GM13976 (cell line): ENCODE measurements at regions of chr4 and their contacts with region 1.

Region 1: DNA sequence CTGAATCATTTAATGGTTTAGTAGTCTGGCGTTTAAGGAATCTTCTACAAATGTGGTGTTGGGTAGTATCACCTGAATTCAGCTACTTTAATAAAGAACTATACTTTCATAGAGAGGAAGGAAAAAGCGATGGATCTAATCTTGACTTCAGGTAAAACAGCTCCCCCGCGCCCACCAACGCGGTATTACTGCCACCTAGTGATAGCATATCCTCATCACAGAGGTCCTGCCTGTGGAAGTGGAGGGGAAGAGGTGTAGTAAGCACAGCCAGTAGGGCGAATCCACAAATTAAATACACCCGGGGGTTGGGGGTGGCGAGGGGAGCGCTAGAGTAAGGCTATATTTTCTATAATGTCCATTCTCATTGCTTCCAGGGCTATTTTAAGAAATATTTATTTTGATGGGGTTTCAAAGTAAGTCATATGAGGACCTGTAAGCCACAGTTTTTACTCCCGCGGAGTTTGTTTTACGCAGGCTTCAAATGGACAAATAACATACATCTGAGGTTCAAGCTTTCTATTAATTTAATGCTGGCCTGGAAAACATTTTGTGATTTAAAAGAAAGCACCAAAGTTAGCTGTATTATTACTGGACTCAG is 8.3 kb upstream of the DAPP1 start:
- DNase-seq: peak; percentile 59
- CTCF ChIP-seq: peak; percentile 68

Region 2: GRCh38 chr4:99117876-99118693 is 690.3 kb before region 1 on chr4:
- in situ Hi-C with region 1: loop called (anchors 25 kb)
- DNase-seq: peak; percentile 32
- CTCF ChIP-seq: peak; percentile 25

Region 3: DNA sequence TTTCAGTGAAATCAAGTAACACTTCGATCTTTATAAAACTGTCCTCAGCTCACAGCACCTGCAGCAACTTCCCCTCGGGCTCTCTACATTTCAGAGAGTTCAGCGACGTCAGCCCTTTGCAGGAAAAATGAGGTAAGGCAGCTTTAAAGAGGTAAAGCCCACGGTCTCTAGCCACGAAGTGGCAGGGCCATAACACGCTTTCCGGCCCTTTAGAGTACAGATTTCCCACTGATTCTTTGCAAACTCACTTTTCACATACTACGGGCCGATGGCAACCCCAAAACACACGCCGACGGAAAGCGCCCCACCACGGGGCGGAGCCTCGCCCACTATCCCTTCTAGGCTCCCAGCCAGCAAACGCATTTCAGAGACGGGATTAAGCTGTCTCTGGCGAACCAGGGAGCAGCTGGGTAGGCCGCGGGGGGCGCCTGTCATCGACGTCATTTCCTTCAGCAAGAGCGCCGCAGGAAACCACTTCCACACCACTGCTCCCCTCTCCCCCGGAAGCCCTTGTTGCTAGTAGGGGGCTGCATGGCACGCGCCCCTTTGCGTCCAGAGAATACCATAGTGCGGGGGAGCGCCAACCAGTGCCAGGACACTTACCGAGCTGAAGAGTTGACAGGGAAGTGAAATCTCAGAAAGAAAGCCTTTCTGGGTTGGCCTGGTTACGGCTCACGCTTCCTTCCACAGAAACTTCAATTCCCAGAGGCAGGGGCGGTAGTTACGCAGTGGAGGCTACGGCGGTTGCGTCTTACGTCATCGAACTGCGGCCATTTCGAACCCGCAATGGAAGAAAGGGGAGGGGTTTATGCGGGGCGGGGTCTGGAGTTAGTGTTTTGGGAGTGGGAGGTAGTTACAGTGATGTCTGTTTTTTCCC is 244.8 kb before region 1 on chr4 and contains the start of gene TRMT10A:
- in situ Hi-C with region 1: loop called (anchors 10 kb)
- DNase-seq: peak; percentile 90
- CTCF ChIP-seq: no peak

Region 4: GRCh38 chr4:99875072-99875471 is 66.7 kb after region 1 on chr4:
- in situ Hi-C with region 1: loop called (anchors 5 kb)
- DNase-seq: no peak
- CTCF ChIP-seq: no peak